Activated T-helper 1 cell treated with anti-CD3 and anti-CD28 coated beads, Interleukin-12 subunit alpha, Interleukin-12 subunit beta, Interleukin-2, Interleukin-4 antibody, amounts not matched to agents 30 ng/mL and 10 ng/mL and 1 ng/mL, durations not matched to agents 14 hours and 24 hours and 36 hours (primary cell): ENCODE measurements at regions of chr20 and their contacts with region 1.

Region 1: GRCh38 chr20:38645980-38646858 is 44.6 kb downstream of the ARHGAP40 start:
- DNase-seq: peak; percentile 87
- H3K4me3 Mint-ChIP-seq: peak overlapping the region; percentile 82
- H3K27ac Mint-ChIP-seq: no peak overlapping the region
- H3K4me1 Mint-ChIP-seq: peaks cover 9% of the 10 kb centered on the region
- H3K27me3 Mint-ChIP-seq: peaks cover 34% of the 10 kb centered on the region

Region 2: GRCh38 chr20:38790200-38791053 is 144.2 kb after region 1 on chr20:
- intact Hi-C with region 1: loop called (anchors 2 kb)
- DNase-seq: peak; percentile 25
- H3K4me3 Mint-ChIP-seq: no peak overlapping the region
- H3K27ac Mint-ChIP-seq: no peak overlapping the region
- H3K4me1 Mint-ChIP-seq: peaks cover 7% of the 10 kb centered on the region
- H3K27me3 Mint-ChIP-seq: no peaks in the 10 kb centered on the region

Region 3: GRCh38 chr20:38935285-38935684 is 289.1 kb after region 1 on chr20:
- intact Hi-C with region 1: loop called (anchors 2 kb)
- DNase-seq: no peak
- H3K4me3 Mint-ChIP-seq: no peak overlapping the region
- H3K27ac Mint-ChIP-seq: no peak overlapping the region
- H3K4me1 Mint-ChIP-seq: peaks cover 18% of the 10 kb centered on the region
- H3K27me3 Mint-ChIP-seq: no peaks in the 10 kb centered on the region

Region 4: DNA sequence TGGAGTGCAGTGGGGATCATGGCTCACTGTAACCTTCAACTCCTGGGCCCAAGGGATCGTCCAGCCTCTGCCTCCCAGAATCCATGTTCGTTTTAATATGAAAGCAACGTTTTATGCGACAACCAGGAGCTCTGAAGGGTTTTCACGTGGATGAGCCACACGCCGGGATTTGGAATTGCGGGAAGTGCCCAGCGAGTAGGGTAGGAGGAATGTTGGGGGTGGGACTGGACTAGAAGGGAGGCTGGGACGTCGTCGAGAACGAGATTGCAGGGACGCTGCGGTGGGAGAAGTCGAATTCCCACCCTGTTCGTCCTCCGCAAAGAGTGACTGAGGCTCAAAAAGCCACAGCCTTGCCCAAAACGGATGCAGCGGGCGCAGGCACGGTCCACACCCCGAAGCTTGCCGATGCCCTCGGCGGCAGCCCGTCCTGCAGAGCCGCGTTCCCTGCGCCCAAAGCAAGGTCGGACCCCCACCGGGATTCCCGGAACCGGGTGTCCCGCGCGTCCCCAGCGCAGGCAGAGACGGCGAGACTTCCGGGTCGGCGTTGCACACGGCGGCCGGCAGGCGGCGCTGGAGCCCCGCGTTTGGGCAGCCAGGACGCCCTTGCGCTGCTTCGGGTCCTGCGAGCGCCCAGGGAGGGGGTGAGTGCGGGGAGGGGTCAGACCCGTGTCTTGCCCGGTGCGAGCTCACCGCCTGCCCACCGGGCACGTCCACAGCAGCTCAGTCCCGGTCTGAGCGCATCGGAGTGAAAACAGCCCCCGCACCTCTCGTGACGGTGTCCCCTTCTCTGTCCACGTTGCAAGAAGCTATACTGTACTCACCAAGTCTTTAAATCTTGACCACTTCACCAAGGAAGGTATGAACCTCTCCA is 403.7 kb after region 1 on chr20:
- intact Hi-C with region 1: loop called (anchors 1 kb)
- DNase-seq: peak; percentile 76
- H3K4me3 Mint-ChIP-seq: peak overlapping the region; percentile 85
- H3K27ac Mint-ChIP-seq: peak overlapping the region; percentile 80
- H3K4me1 Mint-ChIP-seq: peaks cover 4% of the 10 kb centered on the region
- H3K27me3 Mint-ChIP-seq: peaks cover 5% of the 10 kb centered on the region